ENCODE measurements at regions of chr18 and their contacts with region 1.

Region 1: DNA sequence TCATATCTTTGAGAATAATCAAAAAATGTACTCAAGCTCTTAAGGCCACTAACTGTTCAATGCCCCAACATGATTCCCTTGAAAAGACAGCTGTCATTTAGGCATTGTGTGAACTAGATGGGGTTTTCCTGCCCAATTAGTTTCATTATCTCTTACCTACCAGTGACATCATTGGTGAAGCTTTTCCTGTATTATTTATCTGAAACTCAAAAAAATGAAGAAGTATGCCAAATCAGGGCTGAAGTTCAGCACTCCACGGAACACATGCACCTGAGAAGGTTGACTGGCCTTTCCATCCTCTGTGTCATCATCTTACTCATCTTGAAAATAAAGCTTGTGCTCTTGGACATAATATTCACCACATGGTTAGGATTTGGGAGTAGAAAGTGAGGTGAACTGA is 126.4 kb downstream of the TXNL1 start:
- DNase-seq: peak; percentile 51
- ATAC-seq: 0 out of 2 replicates have a peak, but pooled peaks have one; percentile 27
- H3K4me3 ChIP-seq: no peak overlapping the region
- H3K27ac ChIP-seq: no peak overlapping the region
- H3K4me1 ChIP-seq: no peaks in the 10 kb centered on the region
- H3K27me3 ChIP-seq: no peaks in the 10 kb centered on the region
- CTCF ChIP-seq: no peak

Region 2: GRCh38 chr18:56358608-56359280 is 153.3 kb before region 1 on chr18:
- CTCF ChIA-PET with region 1: no interaction called
- POLR2A ChIA-PET with region 1: no interaction called
- intact Hi-C with region 1: no loop called
- DNase-seq: peak; percentile 41
- ATAC-seq: peak; percentile 71
- H3K4me3 ChIP-seq: no peak overlapping the region
- H3K27ac ChIP-seq: no peak overlapping the region
- H3K4me1 ChIP-seq: no peaks in the 10 kb centered on the region
- H3K27me3 ChIP-seq: no peaks in the 10 kb centered on the region
- CTCF ChIP-seq: peak; percentile 59

Region 3: GRCh38 chr18:56627991-56628390 is 116.0 kb after region 1 on chr18:
- CTCF ChIA-PET with region 1: no interaction called
- POLR2A ChIA-PET with region 1: no interaction called
- intact Hi-C with region 1: no loop called
- DNase-seq: no peak
- ATAC-seq: no peak
- H3K4me3 ChIP-seq: no peak overlapping the region
- H3K27ac ChIP-seq: no peak overlapping the region
- H3K4me1 ChIP-seq: no peaks in the 10 kb centered on the region
- H3K27me3 ChIP-seq: no peaks in the 10 kb centered on the region
- CTCF ChIP-seq: no peak

Region 4: GRCh38 chr18:57677262-57678211 is 1165.5 kb after region 1 on chr18:
- CTCF ChIA-PET with region 1: interaction called, 12 read pairs
- POLR2A ChIA-PET with region 1: no interaction called
- intact Hi-C with region 1: no loop called
- DNase-seq: no peak
- ATAC-seq: no peak
- H3K4me3 ChIP-seq: no peak overlapping the region
- H3K27ac ChIP-seq: no peak overlapping the region
- H3K4me1 ChIP-seq: no peaks in the 10 kb centered on the region
- H3K27me3 ChIP-seq: no peaks in the 10 kb centered on the region
- CTCF ChIP-seq: no peak

Measured in PC-3 (cell line).